ENCODE measurements at regions of chr11 and their contacts with region 1.

Region 1: GRCh38 chr11:61281581-61282250 is 13.4 kb downstream of the VWCE start:
- DNase-seq: peak; percentile 35
- H3K4me3 Mint-ChIP-seq: no peak overlapping the region
- H3K27ac Mint-ChIP-seq: no peak overlapping the region
- H3K4me1 Mint-ChIP-seq: peaks cover 12% of the 10 kb centered on the region
- H3K27me3 Mint-ChIP-seq: peaks cover 17% of the 10 kb centered on the region
- CTCF ChIP-seq: no peak

Region 2: GRCh38 chr11:61254403-61255025 is 27.2 kb before region 1 on chr11:
- CTCF ChIA-PET with region 1: interaction called, 9 read pairs
- POLR2A ChIA-PET with region 1: no interaction called
- intact Hi-C with region 1: loop called (anchors 1 kb)
- DNase-seq: peak; percentile 71
- H3K4me3 Mint-ChIP-seq: no peak overlapping the region
- H3K27ac Mint-ChIP-seq: no peak overlapping the region
- H3K4me1 Mint-ChIP-seq: no peaks in the 10 kb centered on the region
- H3K27me3 Mint-ChIP-seq: peaks cover 34% of the 10 kb centered on the region
- CTCF ChIP-seq: peak; percentile 89

Region 3: GRCh38 chr11:61270354-61271076 is 11.2 kb before region 1 on chr11:
- CTCF ChIA-PET with region 1: interaction called, 6 read pairs
- POLR2A ChIA-PET with region 1: interaction called, 13 read pairs
- intact Hi-C with region 1: no loop called
- DNase-seq: no peak
- H3K4me3 Mint-ChIP-seq: no peak overlapping the region
- H3K27ac Mint-ChIP-seq: no peak overlapping the region
- H3K4me1 Mint-ChIP-seq: no peaks in the 10 kb centered on the region
- H3K27me3 Mint-ChIP-seq: no peaks in the 10 kb centered on the region
- CTCF ChIP-seq: no peak

Region 4: GRCh38 chr11:61297746-61298145 is 16.0 kb after region 1 on chr11:
- CTCF ChIA-PET with region 1: no interaction called
- POLR2A ChIA-PET with region 1: interaction called, 10 read pairs
- intact Hi-C with region 1: no loop called
- DNase-seq: peak; percentile 96
- H3K4me3 Mint-ChIP-seq: peak overlapping the region; percentile 35
- H3K27ac Mint-ChIP-seq: peak overlapping the region; percentile 91
- H3K4me1 Mint-ChIP-seq: peaks cover 28% of the 10 kb centered on the region
- H3K27me3 Mint-ChIP-seq: peaks cover 13% of the 10 kb centered on the region
- CTCF ChIP-seq: no peak

Measured in MCF 10A (cell line).